Caco-2 (cell line): ENCODE measurements at regions of chr3 and their contacts with region 1.

Region 1: GRCh38 chr3:31041161-31041978 is 146.9 kb upstream of the GADL1 start:
- DNase-seq: peak; percentile 69 to 71
- H3K4me3 ChIP-seq: no peak overlapping the region
- H3K4me3 Mint-ChIP-seq: no peak overlapping the region
- H3K27ac Mint-ChIP-seq: peak overlapping the region; percentile 88
- H3K4me1 ChIP-seq: peaks cover 17% of the 10 kb centered on the region
- H3K4me1 Mint-ChIP-seq: peaks cover 23% of the 10 kb centered on the region
- H3K27me3 ChIP-seq: no peaks in the 10 kb centered on the region
- H3K27me3 Mint-ChIP-seq: no peaks in the 10 kb centered on the region
- CTCF ChIP-seq: no peak

Region 2: GRCh38 chr3:30996467-30997052 is 44.8 kb before region 1 on chr3:
- CTCF ChIA-PET with region 1: no interaction called
- POLR2A ChIA-PET with region 1: no interaction called
- intact Hi-C with region 1: no loop called
- DNase-seq: no peak
- H3K4me3 ChIP-seq: no peak overlapping the region
- H3K4me3 Mint-ChIP-seq: no peak overlapping the region
- H3K27ac Mint-ChIP-seq: no peak overlapping the region
- H3K4me1 ChIP-seq: no peaks in the 10 kb centered on the region
- H3K4me1 Mint-ChIP-seq: no peaks in the 10 kb centered on the region
- H3K27me3 ChIP-seq: no peaks in the 10 kb centered on the region
- H3K27me3 Mint-ChIP-seq: no peaks in the 10 kb centered on the region
- CTCF ChIP-seq: no peak

Region 3: GRCh38 chr3:31092748-31093551 is 51.6 kb after region 1 on chr3:
- CTCF ChIA-PET with region 1: no interaction called
- POLR2A ChIA-PET with region 1: no interaction called
- intact Hi-C with region 1: loop called (anchors 5 kb)
- DNase-seq: no peak
- H3K4me3 ChIP-seq: no peak overlapping the region
- H3K4me3 Mint-ChIP-seq: no peak overlapping the region
- H3K27ac Mint-ChIP-seq: peak overlapping the region; percentile 90
- H3K4me1 ChIP-seq: peaks cover 34% of the 10 kb centered on the region
- H3K4me1 Mint-ChIP-seq: peaks cover 31% of the 10 kb centered on the region
- H3K27me3 ChIP-seq: no peaks in the 10 kb centered on the region
- H3K27me3 Mint-ChIP-seq: no peaks in the 10 kb centered on the region
- CTCF ChIP-seq: no peak